Cardiac septum (tissue), 1 donor: ENCODE measurements at regions of chr10 and their contacts with region 1.

Region 1: GRCh38 chr10:73886085-73886529 is 11.8 kb upstream of the CAMK2G start:
- DNase-seq: peak; percentile 89

Region 2: GRCh38 chr10:73906524-73907447 is 20.7 kb after region 1 on chr10:
- intact Hi-C with region 1: loop called (anchors 2 kb)
- DNase-seq: no peak

Region 3: DNA sequence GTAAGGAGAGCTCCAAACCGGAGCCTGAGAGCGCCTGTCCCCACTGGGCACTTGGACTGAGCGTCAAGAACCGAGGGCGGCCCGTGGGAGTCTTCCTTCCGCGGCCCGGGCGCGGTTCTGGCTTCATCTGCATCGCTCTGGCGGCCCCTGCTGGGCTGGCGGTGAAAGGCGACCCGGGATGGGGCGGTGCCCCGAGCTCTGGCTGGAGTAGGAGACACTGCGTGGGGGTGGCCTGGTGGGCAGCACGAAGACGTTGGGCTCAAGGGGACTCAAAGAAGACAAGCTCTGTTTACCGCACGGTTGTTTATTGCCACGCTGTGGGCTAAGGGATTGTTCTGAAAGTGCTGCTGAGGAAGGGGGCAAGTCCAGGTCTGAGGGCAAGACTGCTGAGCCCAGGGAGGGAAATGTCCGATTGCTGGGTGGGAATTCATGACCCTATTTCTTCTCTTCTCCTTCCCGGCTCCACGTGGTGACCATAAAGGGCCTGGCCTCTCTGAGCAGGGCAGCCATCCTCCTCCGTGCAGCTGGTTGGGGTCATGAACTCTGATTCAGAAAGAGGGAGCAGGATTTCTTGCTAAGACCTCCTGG is 54.6 kb after region 1 on chr10:
- intact Hi-C with region 1: loop called (anchors 1 kb)
- DNase-seq: peak; percentile 95

Region 4: GRCh38 chr10:73956476-73957359 is 70.6 kb after region 1 on chr10:
- intact Hi-C with region 1: loop called (anchors 5 kb)
- DNase-seq: no peak

Region 5: GRCh38 chr10:73997787-73998622 is 111.9 kb after region 1 on chr10 and contains the start of gene VCL:
- intact Hi-C with region 1: loop called (anchors 5 kb)
- DNase-seq: peak; percentile 99
- total RNA-seq, gene VCL: 284 TPM

Region 6: GRCh38 chr10:74081192-74081803 is 195.2 kb after region 1 on chr10:
- intact Hi-C with region 1: loop called (anchors 2 kb)
- DNase-seq: no peak